Heart left ventricle (tissue), 16 donors: ENCODE measurements at regions of chr4 and their contacts with region 1.

Region 1: GRCh38 chr4:1856042-1856788 is at the start of gene LETM1:
- DNase-seq: peak; percentile 96 to 98 (median 97)
- ATAC-seq: peak; percentile 96 to 98 (median 97)
- H3K4me3 ChIP-seq: peak within 1 kb of the TSS; percentile 55 to 99 (median 84)
- H3K27ac ChIP-seq: peak within 1 kb of the TSS; percentile 26 to 94 (median 88)
- H3K4me1 ChIP-seq: peaks cover 0 to 50% (median 24%) of the 10 kb centered on the region in 12 donors
- H3K27me3 ChIP-seq: no peaks in the 10 kb centered on the region
- CTCF ChIP-seq: peak in 3 of 12 donors; percentile 3 to 31 (median 26)
- POLR2A ChIP-seq: peak in 1 of 2 donors; percentile 81
- total RNA-seq, gene LETM1: 35.0 to 54.7 (median 43.4) TPM

Region 2: GRCh38 chr4:1792832-1793495 is 63.3 kb before region 1 on chr4 and contains the start of gene FGFR3:
- intact Hi-C with region 1: loop called in 1 of 10 experiments (anchors 10 kb)
- DNase-seq: peak in 2 of 5 donors; percentile 54 to 58
- ATAC-seq: peak in 3 of 4 donors; percentile 77 to 88 (median 77)
- H3K4me3 ChIP-seq: peak within 1 kb of the TSS; percentile 25 to 65 (median 54)
- H3K27ac ChIP-seq: peak within 1 kb of the TSS in 2 of 12 donors; percentile 43 to 45
- H3K4me1 ChIP-seq: peaks cover 0 to 36% (median 14%) of the 10 kb centered on the region in 12 donors
- H3K27me3 ChIP-seq: peaks cover 19 to 44% (median 31%) of the 10 kb centered on the region in 9 donors
- CTCF ChIP-seq: no peak
- POLR2A ChIP-seq: no peak
- total RNA-seq, gene FGFR3: 1.2 to 4.6 (median 2.3) TPM

Region 3: GRCh38 chr4:1870578-1871443 is 14.6 kb after region 1 on chr4 and contains the start of gene NSD2:
- intact Hi-C with region 1: loop called in 2 of 10 experiments (anchors 1 kb)
- DNase-seq: peak; percentile 91 to 95 (median 93)
- ATAC-seq: peak; percentile 81 to 90 (median 88)
- H3K4me3 ChIP-seq: peak within 1 kb of the TSS; percentile 79 to 99 (median 93)
- H3K27ac ChIP-seq: peak within 1 kb of the TSS; percentile 90 to 100 (median 100)
- H3K4me1 ChIP-seq: peaks cover 0 to 29% (median 17%) of the 10 kb centered on the region in 12 donors
- H3K27me3 ChIP-seq: peaks cover 0 to 7% (median 0%) of the 10 kb centered on the region in 9 donors
- CTCF ChIP-seq: no peak
- POLR2A ChIP-seq: peak; percentile 9 to 48
- total RNA-seq, gene NSD2: 27.4 to 63.3 (median 40.5) TPM